Head of caudate nucleus (tissue), 42 donors: ENCODE measurements at regions of chr16 and their contacts with region 1.

Region 1: GRCh38 chr16:67399749-67400605 is 6.7 kb upstream of the TPPP3 start:
- DNase-seq: no peak

Region 2: GRCh38 chr16:67364600-67365235 is 35.3 kb before region 1 on chr16:
- intact Hi-C with region 1: loop called (anchors 5 kb)
- DNase-seq: no peak

Region 3: GRCh38 chr16:67595033-67595355 is 195.0 kb after region 1 on chr16:
- intact Hi-C with region 1: no loop called
- DNase-seq: no peak